CD4-positive, alpha-beta T cell (primary cell): ENCODE measurements at regions of chr7 and their contacts with region 1.

Region 1: DNA sequence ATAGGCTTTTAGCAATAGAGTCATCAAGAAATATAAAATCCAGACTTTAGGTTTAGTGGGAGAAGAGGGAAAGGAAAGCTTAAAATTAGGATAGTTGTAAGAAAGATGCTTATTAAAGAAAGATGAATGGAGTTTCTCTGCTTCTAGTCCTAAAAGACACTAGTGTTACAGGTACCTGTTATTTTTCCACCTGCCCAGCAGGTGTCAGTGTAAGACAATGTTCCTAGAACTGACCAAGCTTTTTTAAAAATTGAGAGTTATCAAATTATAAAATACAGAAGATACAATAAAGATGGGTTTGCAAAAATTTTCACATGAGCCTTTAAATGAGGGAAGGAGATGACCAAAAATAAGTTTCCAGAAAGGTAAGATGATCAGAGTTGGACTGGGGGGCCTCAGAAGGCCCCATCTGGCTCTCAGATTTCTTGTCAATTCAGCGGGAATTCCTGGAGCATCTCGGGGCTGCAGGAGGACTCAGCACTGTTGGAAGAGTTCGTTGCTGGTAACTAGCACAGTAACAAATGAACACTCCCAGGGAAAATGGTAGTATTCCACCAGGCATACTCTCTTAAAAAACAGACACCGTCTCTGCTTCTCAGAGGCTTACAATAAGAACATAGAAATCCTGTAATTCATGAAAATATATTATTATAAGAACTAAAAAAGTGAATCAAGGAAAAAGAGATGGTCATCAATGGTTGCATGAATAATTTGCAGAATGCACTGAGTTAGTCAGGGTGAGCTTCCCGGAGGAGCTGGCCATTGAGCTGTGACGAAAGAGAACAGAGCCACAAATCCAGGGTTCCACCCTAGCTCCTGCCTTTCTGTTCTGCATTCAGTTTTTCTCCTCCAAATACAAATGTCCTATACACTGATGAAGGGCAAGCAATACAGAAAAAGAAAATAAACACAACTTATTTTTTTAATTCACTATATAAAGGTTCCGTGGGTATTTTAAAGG is 71.8 kb upstream of the PIK3CG start:
- DNase-seq: peak in 9 of 14 experiments; percentile 12 to 78 (median 22)
- ATAC-seq: peak; percentile 58
- H3K4me3 ChIP-seq: no peak overlapping the region
- H3K4me3 Mint-ChIP-seq: no peak overlapping the region
- H3K27ac ChIP-seq: no peak overlapping the region
- H3K27ac Mint-ChIP-seq: no peak overlapping the region
- H3K4me1 ChIP-seq: no peaks in the 10 kb centered on the region
- H3K4me1 Mint-ChIP-seq: peaks cover 3% of the 10 kb centered on the region
- H3K27me3 ChIP-seq: no peaks in the 10 kb centered on the region
- H3K27me3 Mint-ChIP-seq: no peaks in the 10 kb centered on the region
- CTCF ChIP-seq: peak; percentile 88

Region 2: GRCh38 chr7:106887421-106887820 is 94.1 kb after region 1 on chr7:
- CTCF ChIA-PET with region 1: no interaction called
- POLR2A ChIA-PET with region 1: no interaction called
- intact Hi-C with region 1: loop called in 1 of 2 experiments (anchors 5 kb)
- DNase-seq: no peak
- ATAC-seq: no peak
- H3K4me3 ChIP-seq: no peak overlapping the region
- H3K4me3 Mint-ChIP-seq: no peak overlapping the region
- H3K27ac ChIP-seq: no peak overlapping the region
- H3K27ac Mint-ChIP-seq: no peak overlapping the region
- H3K4me1 ChIP-seq: no peaks in the 10 kb centered on the region
- H3K4me1 Mint-ChIP-seq: peaks cover 5% of the 10 kb centered on the region
- H3K27me3 ChIP-seq: no peaks in the 10 kb centered on the region
- H3K27me3 Mint-ChIP-seq: no peaks in the 10 kb centered on the region
- CTCF ChIP-seq: no peak

Region 3: DNA sequence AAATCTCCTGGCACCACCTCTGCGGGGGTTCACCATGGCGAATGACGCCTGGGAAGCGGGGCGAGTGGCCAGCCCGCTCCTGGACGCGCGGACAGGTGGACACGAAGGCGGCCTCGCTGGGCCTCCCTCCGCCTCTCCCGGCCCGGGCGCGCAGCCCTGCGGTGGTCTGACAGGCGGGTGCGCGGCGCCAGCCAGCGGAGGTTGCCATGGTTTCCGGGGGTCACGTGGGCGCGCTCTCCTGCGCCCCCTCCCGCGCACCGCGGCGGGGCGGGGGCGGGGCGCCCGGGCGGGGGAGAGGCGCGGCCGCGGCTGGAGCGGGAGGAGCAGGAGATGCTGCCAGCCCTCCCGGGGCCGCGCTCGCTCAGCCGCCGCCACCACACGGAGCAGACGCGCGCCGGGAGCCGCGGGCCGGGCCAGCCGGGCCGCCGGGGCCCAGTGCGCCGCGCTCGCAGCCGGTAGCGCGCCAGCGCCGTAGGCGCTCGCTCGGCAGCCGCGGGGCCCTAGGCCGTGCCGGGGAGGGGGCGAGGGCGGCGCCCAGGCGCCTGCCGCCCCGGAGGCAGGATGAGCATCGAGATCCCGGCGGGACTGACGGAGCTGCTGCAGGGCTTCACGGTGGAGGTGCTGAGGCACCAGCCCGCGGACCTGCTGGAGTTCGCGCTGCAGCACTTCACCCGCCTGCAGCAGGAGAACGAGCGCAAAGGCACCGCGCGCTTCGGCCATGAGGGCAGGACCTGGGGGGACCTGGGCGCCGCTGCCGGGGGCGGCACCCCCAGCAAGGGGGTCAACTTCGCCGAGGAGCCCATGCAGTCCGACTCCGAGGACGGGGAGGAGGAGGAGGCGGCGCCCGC is 251.3 kb after region 1 on chr7 and contains the start of gene PRKAR2B:
- CTCF ChIA-PET with region 1: no interaction called
- POLR2A ChIA-PET with region 1: no interaction called
- intact Hi-C with region 1: loop called (anchors 2 to 5 kb)
- DNase-seq: peak; percentile 56 to 93 (median 71)
- ATAC-seq: peak; percentile 94
- H3K4me3 ChIP-seq: peak within 1 kb of the TSS; percentile 60
- H3K4me3 Mint-ChIP-seq: peak within 1 kb of the TSS; percentile 94
- H3K27ac ChIP-seq: no peak within 1 kb of the TSS
- H3K27ac Mint-ChIP-seq: peak within 1 kb of the TSS; percentile 39
- H3K4me1 ChIP-seq: peaks cover 10% of the 10 kb centered on the region
- H3K4me1 Mint-ChIP-seq: peaks cover 13% of the 10 kb centered on the region
- H3K27me3 ChIP-seq: peaks cover 12 to 30% of the 10 kb centered on the region in 2 experiments
- H3K27me3 Mint-ChIP-seq: peaks cover 43% of the 10 kb centered on the region
- CTCF ChIP-seq: no peak
- total RNA-seq, gene PRKAR2B: 0.41 to 0.42 TPM

Region 4: GRCh38 chr7:107725151-107725740 is 932.0 kb after region 1 on chr7:
- CTCF ChIA-PET with region 1: no interaction called
- POLR2A ChIA-PET with region 1: no interaction called
- intact Hi-C with region 1: loop called (anchors 1 to 2 kb)
- DNase-seq: peak in 13 of 14 experiments; percentile 4 to 79 (median 29)
- ATAC-seq: no peak
- H3K4me3 ChIP-seq: no peak overlapping the region
- H3K4me3 Mint-ChIP-seq: no peak overlapping the region
- H3K27ac ChIP-seq: no peak overlapping the region
- H3K27ac Mint-ChIP-seq: no peak overlapping the region
- H3K4me1 ChIP-seq: no peaks in the 10 kb centered on the region
- H3K4me1 Mint-ChIP-seq: no peaks in the 10 kb centered on the region
- H3K27me3 ChIP-seq: no peaks in the 10 kb centered on the region
- H3K27me3 Mint-ChIP-seq: peaks cover 9% of the 10 kb centered on the region
- CTCF ChIP-seq: peak; percentile 78

Region 5: GRCh38 chr7:107743567-107744344 is 950.5 kb after region 1 on chr7 and contains the start of gene CBLL1:
- CTCF ChIA-PET with region 1: no interaction called
- POLR2A ChIA-PET with region 1: no interaction called
- intact Hi-C with region 1: no loop called
- DNase-seq: peak; percentile 94 to 98 (median 97)
- ATAC-seq: peak; percentile 90
- H3K4me3 ChIP-seq: peak within 1 kb of the TSS; percentile 87
- H3K4me3 Mint-ChIP-seq: peak within 1 kb of the TSS; percentile 93
- H3K27ac ChIP-seq: peak within 1 kb of the TSS; percentile 99
- H3K27ac Mint-ChIP-seq: peak within 1 kb of the TSS; percentile 99
- H3K4me1 ChIP-seq: peaks cover 15% of the 10 kb centered on the region
- H3K4me1 Mint-ChIP-seq: peaks cover 55% of the 10 kb centered on the region
- H3K27me3 ChIP-seq: no peaks in the 10 kb centered on the region
- H3K27me3 Mint-ChIP-seq: no peaks in the 10 kb centered on the region
- CTCF ChIP-seq: peak; percentile 68
- total RNA-seq, gene CBLL1: 77.8 to 80.2 TPM